ENCODE measurements at regions of chr19 and their contacts with region 1.

Region 1: GRCh38 chr19:13195678-13196077 is 45.5 kb downstream of the IER2 start:
- DNase-seq: peak in 5 of 9 donors; percentile 26 to 42 (median 28)
- ATAC-seq: no peak
- H3K4me3 ChIP-seq: no peak overlapping the region
- H3K4me3 Mint-ChIP-seq: peak overlapping the region in 3 of 10 donors; percentile 7 to 24 (median 17)
- H3K27ac ChIP-seq: no peak overlapping the region
- H3K27ac Mint-ChIP-seq: peak overlapping the region in 6 of 9 donors; percentile 39 to 79 (median 72)
- H3K4me1 ChIP-seq: peaks cover 6 to 33% of the 10 kb centered on the region in 2 donors
- H3K4me1 Mint-ChIP-seq: peaks cover 5 to 31% (median 26%) of the 10 kb centered on the region in 7 donors
- H3K27me3 ChIP-seq: no peaks in the 10 kb centered on the region
- H3K27me3 Mint-ChIP-seq: no peaks in the 10 kb centered on the region

Region 2: GRCh38 chr19:12983542-12984142 is 212.0 kb before region 1 on chr19:
- CTCF ChIA-PET with region 1: no interaction called
- POLR2A ChIA-PET with region 1: no interaction called
- intact Hi-C with region 1: loop called in 1 of 2 experiments (anchors 1 kb)
- DNase-seq: peak; percentile 72 to 93 (median 84)
- ATAC-seq: peak; percentile 94
- H3K4me3 ChIP-seq: no peak overlapping the region
- H3K4me3 Mint-ChIP-seq: no peak overlapping the region
- H3K27ac ChIP-seq: peak overlapping the region; percentile 32
- H3K27ac Mint-ChIP-seq: no peak overlapping the region
- H3K4me1 ChIP-seq: peaks cover 6 to 16% of the 10 kb centered on the region in 2 donors
- H3K4me1 Mint-ChIP-seq: peaks cover 0 to 9% (median 0%) of the 10 kb centered on the region in 7 donors
- H3K27me3 ChIP-seq: no peaks in the 10 kb centered on the region
- H3K27me3 Mint-ChIP-seq: peaks cover 0 to 11% (median 0%) of the 10 kb centered on the region in 5 donors

Region 3: GRCh38 chr19:13162518-13163314 is 33.0 kb before region 1 on chr19:
- CTCF ChIA-PET with region 1: interaction called, 32 read pairs
- POLR2A ChIA-PET with region 1: interaction called, 263 read pairs
- intact Hi-C with region 1: loop called (anchors 1 kb)
- DNase-seq: peak; percentile 46 to 91 (median 75)
- ATAC-seq: peak; percentile 73
- H3K4me3 ChIP-seq: peak overlapping the region; percentile 60
- H3K4me3 Mint-ChIP-seq: peak overlapping the region; percentile 85 to 94 (median 90)
- H3K27ac ChIP-seq: peak overlapping the region; percentile 90
- H3K27ac Mint-ChIP-seq: peak overlapping the region; percentile 92 to 99 (median 97)
- H3K4me1 ChIP-seq: peaks cover 54 to 73% of the 10 kb centered on the region in 2 donors
- H3K4me1 Mint-ChIP-seq: peaks cover 26 to 87% (median 67%) of the 10 kb centered on the region in 7 donors
- H3K27me3 ChIP-seq: no peaks in the 10 kb centered on the region
- H3K27me3 Mint-ChIP-seq: no peaks in the 10 kb centered on the region

Region 4: DNA sequence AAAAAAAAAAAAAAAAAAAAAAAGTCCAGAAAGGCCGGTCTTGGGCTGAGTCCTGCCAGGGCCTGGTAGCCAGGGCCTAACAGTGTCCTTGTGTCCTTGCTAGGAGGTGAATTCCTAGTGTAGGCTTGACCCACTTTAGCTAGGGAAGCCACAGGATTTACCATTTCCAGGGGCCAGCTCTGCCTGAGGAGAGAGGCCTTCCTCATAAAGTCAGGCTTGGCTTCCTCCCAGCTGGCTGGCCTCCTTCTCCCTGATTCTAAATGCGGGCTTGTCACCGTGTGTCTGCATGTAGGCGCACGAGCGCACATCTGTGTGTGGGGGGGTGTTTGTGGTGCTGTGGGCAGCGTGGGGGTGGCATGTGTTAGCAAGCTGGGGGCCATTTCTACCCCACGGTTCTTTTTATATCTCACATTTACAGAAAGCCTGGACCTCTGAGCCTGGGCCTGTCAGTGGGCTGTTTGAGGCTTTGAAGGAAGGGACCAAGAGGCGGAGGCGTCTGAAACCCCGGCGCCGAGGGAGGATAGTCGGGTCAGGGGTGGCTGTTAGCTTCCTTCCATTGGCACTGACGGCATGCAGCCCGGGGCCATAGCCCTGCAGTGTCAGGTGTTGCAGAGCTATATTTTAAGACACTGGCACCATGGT is 13.8 kb before region 1 on chr19:
- CTCF ChIA-PET with region 1: interaction called, 18 read pairs
- POLR2A ChIA-PET with region 1: interaction called, 10 read pairs
- intact Hi-C with region 1: no loop called
- DNase-seq: no peak
- ATAC-seq: peak; percentile 71
- H3K4me3 ChIP-seq: no peak overlapping the region
- H3K4me3 Mint-ChIP-seq: peak overlapping the region in 8 of 10 donors; percentile 24 to 71 (median 62)
- H3K27ac ChIP-seq: no peak overlapping the region
- H3K27ac Mint-ChIP-seq: peak overlapping the region; percentile 20 to 86 (median 76)
- H3K4me1 ChIP-seq: peaks cover 20 to 21% of the 10 kb centered on the region in 2 donors
- H3K4me1 Mint-ChIP-seq: peaks cover 14 to 43% (median 38%) of the 10 kb centered on the region in 7 donors
- H3K27me3 ChIP-seq: no peaks in the 10 kb centered on the region
- H3K27me3 Mint-ChIP-seq: no peaks in the 10 kb centered on the region

Region 5: DNA sequence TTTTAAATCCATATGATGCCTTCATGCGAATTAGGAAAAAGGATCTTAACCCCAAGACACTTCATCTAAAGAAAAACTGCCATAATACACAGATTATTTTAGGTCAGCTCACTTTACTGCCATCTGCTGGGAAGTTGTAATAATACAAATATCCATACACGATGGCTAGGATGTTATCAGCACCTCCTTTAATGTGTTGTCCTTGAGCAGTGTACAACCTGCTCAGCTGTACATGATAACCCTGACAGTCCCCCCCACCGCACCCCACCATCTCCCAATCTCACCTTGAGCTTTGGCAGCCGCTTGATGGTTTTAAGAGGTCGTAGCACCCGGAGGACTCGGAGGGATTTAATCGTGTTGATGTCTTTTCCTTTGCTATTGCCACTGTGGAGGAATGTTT is 66.8 kb after region 1 on chr19:
- CTCF ChIA-PET with region 1: interaction called, 13 read pairs
- POLR2A ChIA-PET with region 1: interaction called, 6 read pairs
- intact Hi-C with region 1: loop called (anchors 1 kb)
- DNase-seq: peak in 6 of 9 donors; percentile 21 to 61 (median 52)
- ATAC-seq: peak; percentile 73
- H3K4me3 ChIP-seq: no peak overlapping the region
- H3K4me3 Mint-ChIP-seq: no peak overlapping the region
- H3K27ac ChIP-seq: no peak overlapping the region
- H3K27ac Mint-ChIP-seq: peak overlapping the region in 3 of 9 donors; percentile 5 to 84 (median 47)
- H3K4me1 ChIP-seq: no peaks in the 10 kb centered on the region
- H3K4me1 Mint-ChIP-seq: peaks cover 0 to 15% (median 0%) of the 10 kb centered on the region in 7 donors
- H3K27me3 ChIP-seq: no peaks in the 10 kb centered on the region
- H3K27me3 Mint-ChIP-seq: peaks cover 0 to 21% (median 10%) of the 10 kb centered on the region in 5 donors

Region 6: GRCh38 chr19:13284929-13285928 is 89.6 kb after region 1 on chr19:
- CTCF ChIA-PET with region 1: no interaction called
- POLR2A ChIA-PET with region 1: no interaction called
- intact Hi-C with region 1: no loop called
- DNase-seq: no peak
- ATAC-seq: no peak
- H3K4me3 ChIP-seq: no peak overlapping the region
- H3K4me3 Mint-ChIP-seq: no peak overlapping the region
- H3K27ac ChIP-seq: no peak overlapping the region
- H3K27ac Mint-ChIP-seq: peak overlapping the region in 1 of 9 donors; percentile 46
- H3K4me1 ChIP-seq: no peaks in the 10 kb centered on the region
- H3K4me1 Mint-ChIP-seq: no peaks in the 10 kb centered on the region
- H3K27me3 ChIP-seq: no peaks in the 10 kb centered on the region
- H3K27me3 Mint-ChIP-seq: peaks cover 0 to 10% (median 5%) of the 10 kb centered on the region in 5 donors

Region 7: GRCh38 chr19:13505761-13506470 is 310.2 kb after region 1 on chr19:
- CTCF ChIA-PET with region 1: no interaction called
- POLR2A ChIA-PET with region 1: no interaction called
- intact Hi-C with region 1: no loop called
- DNase-seq: peak in 3 of 9 donors; percentile 5 to 25 (median 8)
- ATAC-seq: no peak
- H3K4me3 ChIP-seq: no peak overlapping the region
- H3K4me3 Mint-ChIP-seq: peak overlapping the region in 3 of 10 donors; percentile 27 to 58 (median 36)
- H3K27ac ChIP-seq: no peak overlapping the region
- H3K27ac Mint-ChIP-seq: no peak overlapping the region
- H3K4me1 ChIP-seq: no peaks in the 10 kb centered on the region
- H3K4me1 Mint-ChIP-seq: peaks cover 0 to 6% (median 0%) of the 10 kb centered on the region in 7 donors
- H3K27me3 ChIP-seq: peaks cover 7 to 8% of the 10 kb centered on the region in 2 donors
- H3K27me3 Mint-ChIP-seq: peaks cover 56 to 84% (median 69%) of the 10 kb centered on the region in 5 donors

Region 8: GRCh38 chr19:13588957-13589833 is 393.5 kb after region 1 on chr19:
- CTCF ChIA-PET with region 1: interaction called, 3 read pairs
- POLR2A ChIA-PET with region 1: no interaction called
- intact Hi-C with region 1: loop called in 1 of 2 experiments (anchors 5 kb)
- DNase-seq: peak; percentile 59 to 91 (median 82)
- ATAC-seq: peak; percentile 98
- H3K4me3 ChIP-seq: no peak overlapping the region
- H3K4me3 Mint-ChIP-seq: peak overlapping the region in 2 of 10 donors; percentile 26 to 27
- H3K27ac ChIP-seq: no peak overlapping the region
- H3K27ac Mint-ChIP-seq: no peak overlapping the region
- H3K4me1 ChIP-seq: peaks cover 0 to 4% of the 10 kb centered on the region in 2 donors
- H3K4me1 Mint-ChIP-seq: peaks cover 0 to 2% (median 0%) of the 10 kb centered on the region in 7 donors
- H3K27me3 ChIP-seq: peaks cover 0 to 4% of the 10 kb centered on the region in 2 donors
- H3K27me3 Mint-ChIP-seq: peaks cover 0 to 18% (median 10%) of the 10 kb centered on the region in 5 donors